ENCODE measurements at regions of chr12 and their contacts with region 1.

Region 1: GRCh38 chr12:109110988-109111495 is 5.3 kb upstream of the ACACB start:
- DNase-seq: peak in 13 of 14 experiments; percentile 23 to 79 (median 50)
- ATAC-seq: peak; percentile 83
- H3K4me3 ChIP-seq: peak overlapping the region; percentile 67
- H3K4me3 Mint-ChIP-seq: peak overlapping the region; percentile 88
- H3K27ac ChIP-seq: peak overlapping the region; percentile 56 to 57
- H3K27ac Mint-ChIP-seq: peak overlapping the region; percentile 85
- H3K4me1 ChIP-seq: peaks cover 18% of the 10 kb centered on the region
- H3K4me1 Mint-ChIP-seq: peaks cover 41% of the 10 kb centered on the region
- H3K27me3 ChIP-seq: no peaks in the 10 kb centered on the region
- H3K27me3 Mint-ChIP-seq: no peaks in the 10 kb centered on the region
- CTCF ChIP-seq: no peak

Region 2: DNA sequence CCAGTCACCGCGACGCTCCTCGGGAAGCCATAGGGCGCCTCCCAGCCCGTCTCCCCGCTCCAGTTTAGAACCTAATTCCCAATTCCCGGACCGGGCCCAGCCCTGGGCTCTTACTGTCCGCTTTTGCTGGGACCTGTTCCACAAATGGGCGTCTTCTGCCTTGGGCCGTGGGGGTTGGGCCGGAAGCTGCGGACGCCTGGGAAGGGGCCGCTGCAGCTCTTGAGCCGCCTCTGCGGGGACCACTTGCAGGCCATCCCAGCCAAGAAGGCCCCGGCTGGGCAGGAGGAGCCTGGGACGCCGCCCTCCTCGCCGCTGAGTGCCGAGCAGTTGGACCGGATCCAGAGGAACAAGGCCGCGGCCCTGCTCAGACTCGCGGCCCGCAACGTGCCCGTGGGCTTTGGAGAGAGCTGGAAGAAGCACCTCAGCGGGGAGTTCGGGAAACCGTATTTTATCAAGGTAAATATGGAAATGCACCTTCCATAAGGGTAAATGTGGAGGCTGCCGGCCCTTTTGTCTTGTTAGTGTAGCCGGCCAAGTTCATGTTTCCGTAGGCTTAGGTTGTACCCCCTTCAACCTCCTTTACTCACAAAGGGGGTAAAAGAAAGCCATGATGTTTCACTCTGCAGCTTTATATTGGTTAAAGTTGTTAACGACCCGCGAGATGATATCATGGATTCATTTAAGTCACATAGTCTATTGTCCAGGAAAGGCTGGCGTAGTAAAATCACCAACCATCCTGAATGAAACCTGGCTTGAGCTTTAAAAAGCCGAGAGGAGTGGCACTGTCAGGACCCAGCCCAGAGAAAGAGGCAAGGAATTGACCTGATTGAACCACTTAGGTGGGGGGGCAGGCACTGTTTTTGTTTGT is 12.6 kb before region 1 on chr12:
- CTCF ChIA-PET with region 1: interaction called, 28 read pairs
- POLR2A ChIA-PET with region 1: interaction called, 10 read pairs
- intact Hi-C with region 1: no loop called
- DNase-seq: peak in 4 of 14 experiments; percentile 22 to 63 (median 42)
- ATAC-seq: peak; percentile 13
- H3K4me3 ChIP-seq: peak overlapping the region; percentile 92
- H3K4me3 Mint-ChIP-seq: peak overlapping the region; percentile 94
- H3K27ac ChIP-seq: peak overlapping the region; percentile 6 to 43
- H3K27ac Mint-ChIP-seq: peak overlapping the region; percentile 70
- H3K4me1 ChIP-seq: peaks cover 38% of the 10 kb centered on the region
- H3K4me1 Mint-ChIP-seq: peaks cover 43% of the 10 kb centered on the region
- H3K27me3 ChIP-seq: no peaks in the 10 kb centered on the region
- H3K27me3 Mint-ChIP-seq: no peaks in the 10 kb centered on the region
- CTCF ChIP-seq: no peak

Region 3: DNA sequence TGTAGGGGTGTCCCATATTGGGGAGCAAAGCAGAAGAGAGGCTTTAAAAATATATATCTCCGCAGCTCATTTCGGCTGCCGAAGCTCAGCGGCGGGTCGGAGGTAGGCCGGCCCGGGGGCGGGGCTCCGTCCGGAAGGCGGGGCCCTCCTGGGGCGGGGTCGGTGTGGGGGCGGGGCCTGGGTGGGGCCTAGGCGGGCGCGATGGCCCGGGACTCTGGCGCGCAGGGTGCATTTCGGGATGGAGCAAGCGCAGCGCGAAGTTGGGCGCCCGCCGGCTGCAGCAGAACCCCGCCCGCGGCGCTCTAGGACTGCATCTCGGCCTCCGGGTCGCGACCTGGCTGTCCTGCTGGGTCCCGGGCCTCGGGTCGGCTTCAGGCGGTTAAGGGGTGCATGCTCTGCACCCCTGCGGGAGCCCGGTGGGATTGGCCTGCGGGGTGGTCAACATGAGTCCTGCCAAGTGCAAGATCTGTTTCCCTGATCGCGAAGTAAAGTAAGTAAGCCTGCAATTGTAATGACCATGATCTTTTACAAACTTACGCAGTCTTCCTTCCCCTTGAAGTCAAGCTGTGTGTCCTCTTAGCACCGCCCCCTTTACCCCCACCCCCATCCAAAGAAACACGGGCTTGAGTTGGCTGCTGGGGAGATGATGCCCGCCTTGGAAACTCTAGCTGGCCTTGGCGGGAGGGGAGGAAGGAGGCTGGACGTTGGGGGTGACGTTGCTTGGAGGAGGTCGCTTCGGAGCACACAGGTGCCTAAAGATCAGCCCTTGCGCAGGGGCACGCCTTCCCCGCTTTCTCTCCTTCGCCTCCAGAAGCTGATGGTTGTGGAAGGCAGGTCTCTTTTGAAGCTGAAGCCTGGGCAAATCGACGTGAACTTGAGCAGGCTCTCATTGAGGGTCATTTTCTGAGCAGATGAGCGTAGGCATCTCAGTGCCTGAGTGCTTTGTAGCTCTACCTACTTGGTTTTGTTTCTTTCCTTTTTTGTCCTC is 43.7 kb after region 1 on chr12:
- CTCF ChIA-PET with region 1: interaction called, 5 read pairs
- POLR2A ChIA-PET with region 1: interaction called, 12 read pairs
- intact Hi-C with region 1: no loop called
- DNase-seq: peak; percentile 71 to 90 (median 78)
- ATAC-seq: peak; percentile 95
- H3K4me3 ChIP-seq: peak overlapping the region; percentile 75
- H3K4me3 Mint-ChIP-seq: peak overlapping the region; percentile 96
- H3K27ac ChIP-seq: peak overlapping the region in 1 of 2 donors; percentile 17
- H3K27ac Mint-ChIP-seq: peak overlapping the region; percentile 93
- H3K4me1 ChIP-seq: peaks cover 16% of the 10 kb centered on the region
- H3K4me1 Mint-ChIP-seq: peaks cover 21% of the 10 kb centered on the region
- H3K27me3 ChIP-seq: no peaks in the 10 kb centered on the region
- H3K27me3 Mint-ChIP-seq: no peaks in the 10 kb centered on the region
- CTCF ChIP-seq: no peak

Region 4: GRCh38 chr12:109232731-109233130 is 121.7 kb after region 1 on chr12:
- CTCF ChIA-PET with region 1: no interaction called
- POLR2A ChIA-PET with region 1: no interaction called
- intact Hi-C with region 1: no loop called
- DNase-seq: no peak
- ATAC-seq: no peak
- H3K4me3 ChIP-seq: no peak overlapping the region
- H3K4me3 Mint-ChIP-seq: no peak overlapping the region
- H3K27ac ChIP-seq: no peak overlapping the region
- H3K27ac Mint-ChIP-seq: no peak overlapping the region
- H3K4me1 ChIP-seq: no peaks in the 10 kb centered on the region
- H3K4me1 Mint-ChIP-seq: no peaks in the 10 kb centered on the region
- H3K27me3 ChIP-seq: no peaks in the 10 kb centered on the region
- H3K27me3 Mint-ChIP-seq: no peaks in the 10 kb centered on the region
- CTCF ChIP-seq: no peak

Region 5: DNA sequence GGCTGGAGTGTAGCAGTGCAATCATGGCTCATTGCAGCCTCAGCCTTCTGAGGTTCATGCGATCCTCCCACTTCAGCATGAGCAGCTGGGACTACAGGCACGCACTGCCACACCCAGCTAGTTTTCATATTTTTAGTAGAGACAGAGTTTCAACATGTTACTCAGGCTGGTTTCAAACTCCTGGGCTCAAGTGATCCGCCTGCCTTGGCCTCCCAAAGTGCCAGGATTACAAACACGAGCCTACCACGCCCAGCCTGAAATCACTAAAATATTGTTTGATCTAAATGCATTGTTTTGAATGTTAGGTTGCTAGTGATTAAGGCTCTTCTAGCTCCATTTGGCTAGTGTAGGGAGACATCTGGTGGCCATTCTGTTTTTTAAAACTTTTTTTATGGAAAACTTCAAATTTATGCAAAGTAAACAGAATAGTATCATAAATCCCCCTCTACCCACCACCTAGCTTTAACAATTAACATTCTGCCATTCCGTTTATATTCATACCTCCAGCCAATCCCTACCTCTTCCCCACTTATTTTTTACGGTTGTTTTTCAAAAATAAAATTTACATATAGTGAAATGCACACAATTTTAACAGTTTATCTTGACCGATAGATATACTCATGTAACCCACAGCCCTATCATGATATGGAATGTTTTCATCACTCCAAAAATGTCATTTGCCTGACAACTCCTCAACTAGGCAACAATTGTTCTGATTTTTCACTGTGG is 274.5 kb after region 1 on chr12:
- CTCF ChIA-PET with region 1: no interaction called
- POLR2A ChIA-PET with region 1: no interaction called
- intact Hi-C with region 1: loop called (anchors 2 to 5 kb)
- DNase-seq: peak in 3 of 14 experiments; percentile 38 to 41 (median 40)
- ATAC-seq: no peak
- H3K4me3 ChIP-seq: no peak overlapping the region
- H3K4me3 Mint-ChIP-seq: no peak overlapping the region
- H3K27ac ChIP-seq: no peak overlapping the region
- H3K27ac Mint-ChIP-seq: no peak overlapping the region
- H3K4me1 ChIP-seq: no peaks in the 10 kb centered on the region
- H3K4me1 Mint-ChIP-seq: no peaks in the 10 kb centered on the region
- H3K27me3 ChIP-seq: peaks cover 0 to 11% of the 10 kb centered on the region in 2 experiments
- H3K27me3 Mint-ChIP-seq: peaks cover 60% of the 10 kb centered on the region
- CTCF ChIP-seq: peak; percentile 52

Region 6: DNA sequence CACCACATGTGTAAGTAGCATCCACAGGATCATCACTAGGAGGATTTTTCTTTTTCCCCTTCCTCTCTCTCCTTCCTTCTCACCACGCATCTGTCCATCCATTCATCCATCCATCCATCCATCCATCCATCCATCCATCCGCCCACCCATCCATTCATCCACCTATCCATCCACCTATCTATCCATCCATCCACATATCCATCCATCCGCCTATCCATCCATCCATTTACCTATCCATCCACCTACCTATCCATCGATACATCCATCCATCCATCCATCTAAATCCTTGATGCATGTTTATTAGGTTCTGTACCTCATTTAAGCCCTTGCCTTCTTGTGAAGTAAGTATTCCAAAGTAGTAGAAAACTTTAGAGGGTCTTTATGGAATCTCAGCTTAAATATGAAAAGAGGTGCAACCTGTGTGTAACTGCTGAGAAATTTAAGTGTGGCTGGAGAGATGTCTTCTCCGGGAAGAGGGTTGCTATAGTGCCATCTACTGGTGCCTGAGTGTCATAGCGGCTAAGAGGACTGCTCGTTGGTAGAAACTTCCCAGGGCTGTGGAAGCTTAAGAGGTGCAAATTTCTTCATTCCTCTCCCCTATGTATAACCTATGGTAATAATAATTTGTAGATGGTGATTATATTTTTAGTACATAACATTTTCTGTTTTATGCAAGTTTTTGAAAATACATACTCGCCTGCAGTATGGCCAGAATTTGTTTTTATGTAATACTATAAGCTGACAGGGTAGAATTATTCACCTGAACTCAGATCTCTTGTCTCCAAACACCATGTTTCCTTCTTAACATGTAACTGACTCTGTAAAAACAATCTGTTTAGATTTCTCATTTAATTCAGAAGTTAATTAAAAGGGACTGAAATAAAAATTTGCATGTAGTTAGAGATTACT is 282.6 kb after region 1 on chr12:
- CTCF ChIA-PET with region 1: no interaction called
- POLR2A ChIA-PET with region 1: no interaction called
- intact Hi-C with region 1: loop called (anchors 2 to 5 kb)
- DNase-seq: peak in 13 of 14 experiments; percentile 3 to 69 (median 15)
- ATAC-seq: peak; percentile 61
- H3K4me3 ChIP-seq: no peak overlapping the region
- H3K4me3 Mint-ChIP-seq: no peak overlapping the region
- H3K27ac ChIP-seq: no peak overlapping the region
- H3K27ac Mint-ChIP-seq: no peak overlapping the region
- H3K4me1 ChIP-seq: no peaks in the 10 kb centered on the region
- H3K4me1 Mint-ChIP-seq: no peaks in the 10 kb centered on the region
- H3K27me3 ChIP-seq: peaks cover 7 to 11% of the 10 kb centered on the region in 2 experiments
- H3K27me3 Mint-ChIP-seq: peaks cover 43% of the 10 kb centered on the region
- CTCF ChIP-seq: peak; percentile 86

Measured in CD4-positive, alpha-beta T cell (primary cell).